HepG2 (cell line): ENCODE measurements at regions of chr15 and their contacts with region 1.

Region 1: DNA sequence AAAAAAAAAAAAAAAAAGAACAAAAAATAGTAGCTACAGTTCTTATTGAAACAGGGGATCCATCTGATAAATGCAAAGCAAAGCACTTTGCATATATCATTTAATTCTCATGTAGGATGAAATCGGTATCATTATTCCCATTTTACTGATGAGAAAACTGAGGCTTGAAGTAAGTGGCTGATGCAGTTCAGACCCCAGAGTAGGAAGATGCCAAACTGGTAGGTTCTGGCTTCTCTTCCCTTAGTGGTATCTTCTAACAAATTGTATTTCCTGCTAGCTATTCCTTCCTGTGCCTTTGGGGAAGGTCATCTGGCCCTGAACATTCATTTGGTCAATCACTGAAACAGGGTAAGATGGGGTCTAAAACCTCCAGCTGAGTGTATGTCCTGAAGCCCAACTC is 21.9 kb downstream of the PIF1 start:
- DNase-seq: no peak
- ATAC-seq: no peak
- H3K4me3 ChIP-seq: no peak overlapping the region
- H3K27ac ChIP-seq: no peak overlapping the region
- H3K4me1 ChIP-seq: peaks cover 9% of the 10 kb centered on the region
- H3K27me3 ChIP-seq: peaks cover 1 to 3% of the 10 kb centered on the region in 2 experiments; a peak in 2 of 5 replicates
- CTCF ChIP-seq: no peak
- EP300 ChIP-seq: no peak
- POLR2A ChIP-seq: no peak
- RAD21 ChIP-seq: no peak

Region 2: GRCh38 chr15:64536244-64536836 is 267.2 kb before region 1 on chr15:
- CTCF ChIA-PET with region 1: no interaction called
- POLR2A ChIA-PET with region 1: no interaction called
- in situ Hi-C with region 1: no loop called
- intact Hi-C with region 1: no loop called
- DNase-seq: peak; percentile 85
- ATAC-seq: peak; percentile 90
- H3K4me3 ChIP-seq: no peak overlapping the region; a peak in 1 of 6 replicates
- H3K27ac ChIP-seq: peak overlapping the region; percentile 48
- H3K4me1 ChIP-seq: peaks cover 32% of the 10 kb centered on the region
- H3K27me3 ChIP-seq: no peaks in the 10 kb centered on the region
- CTCF ChIP-seq: no peak
- EP300 ChIP-seq: peak in 1 of 2 experiments; percentile 35; a peak in 1 of 4 replicates
- POLR2A ChIP-seq: no peak
- RAD21 ChIP-seq: no peak

Region 3: DNA sequence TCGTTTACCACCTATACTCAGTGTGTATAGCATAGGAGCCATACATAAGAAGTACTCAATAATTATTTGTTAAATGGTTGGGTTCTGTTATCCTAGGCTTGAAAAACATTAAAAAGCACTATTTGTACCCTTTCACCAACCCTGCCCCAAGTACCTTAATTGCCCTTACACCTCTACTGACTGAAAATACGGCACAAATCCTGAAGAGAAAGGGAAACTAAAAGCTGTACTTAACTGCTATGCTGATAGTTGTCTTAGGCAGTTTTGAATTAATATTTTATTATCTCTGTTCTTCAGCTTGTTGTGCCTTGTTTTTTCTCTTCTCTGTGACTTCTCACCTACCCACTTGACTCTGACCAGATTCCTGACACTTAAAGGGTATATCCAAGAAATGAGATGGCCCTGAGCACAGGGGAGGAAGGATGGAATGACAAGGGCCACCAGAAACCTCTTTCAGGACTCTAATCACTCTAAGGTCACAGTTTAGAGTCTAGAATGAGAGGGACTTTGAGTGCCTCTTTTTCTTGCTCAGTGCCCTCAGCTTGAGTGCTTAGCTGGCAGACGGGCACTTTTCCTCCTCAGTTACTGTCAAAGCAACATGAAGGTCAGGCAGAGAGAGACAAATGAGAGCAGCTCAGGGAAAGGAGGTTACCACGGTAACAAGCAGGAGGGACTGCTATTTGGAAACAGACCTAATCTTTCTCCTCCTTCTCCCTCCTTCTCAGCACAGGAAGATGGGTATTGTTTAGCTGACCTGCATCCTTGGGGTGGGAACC is 206.6 kb before region 1 on chr15:
- CTCF ChIA-PET with region 1: no interaction called
- POLR2A ChIA-PET with region 1: no interaction called
- in situ Hi-C with region 1: no loop called
- intact Hi-C with region 1: no loop called
- DNase-seq: no peak
- ATAC-seq: no peak
- H3K4me3 ChIP-seq: no peak overlapping the region
- H3K27ac ChIP-seq: no peak overlapping the region
- H3K4me1 ChIP-seq: peaks cover 19% of the 10 kb centered on the region
- H3K27me3 ChIP-seq: no peaks in the 10 kb centered on the region
- CTCF ChIP-seq: no peak
- EP300 ChIP-seq: no peak
- POLR2A ChIP-seq: no peak
- RAD21 ChIP-seq: no peak

Region 4: GRCh38 chr15:64747578-64747977 is 55.9 kb before region 1 on chr15:
- CTCF ChIA-PET with region 1: no interaction called
- POLR2A ChIA-PET with region 1: no interaction called
- in situ Hi-C with region 1: no loop called
- intact Hi-C with region 1: loop called (anchors 2 kb)
- DNase-seq: no peak
- ATAC-seq: no peak
- H3K4me3 ChIP-seq: no peak overlapping the region
- H3K27ac ChIP-seq: no peak overlapping the region
- H3K4me1 ChIP-seq: peaks cover 12% of the 10 kb centered on the region
- H3K27me3 ChIP-seq: peaks cover 5 to 64% of the 10 kb centered on the region in 2 experiments; a peak in 4 of 5 replicates
- CTCF ChIP-seq: no peak
- EP300 ChIP-seq: no peak
- POLR2A ChIP-seq: no peak
- RAD21 ChIP-seq: no peak